PC-9 (cell line): ENCODE measurements at regions of chr6 and their contacts with region 1.

Region 1: DNA sequence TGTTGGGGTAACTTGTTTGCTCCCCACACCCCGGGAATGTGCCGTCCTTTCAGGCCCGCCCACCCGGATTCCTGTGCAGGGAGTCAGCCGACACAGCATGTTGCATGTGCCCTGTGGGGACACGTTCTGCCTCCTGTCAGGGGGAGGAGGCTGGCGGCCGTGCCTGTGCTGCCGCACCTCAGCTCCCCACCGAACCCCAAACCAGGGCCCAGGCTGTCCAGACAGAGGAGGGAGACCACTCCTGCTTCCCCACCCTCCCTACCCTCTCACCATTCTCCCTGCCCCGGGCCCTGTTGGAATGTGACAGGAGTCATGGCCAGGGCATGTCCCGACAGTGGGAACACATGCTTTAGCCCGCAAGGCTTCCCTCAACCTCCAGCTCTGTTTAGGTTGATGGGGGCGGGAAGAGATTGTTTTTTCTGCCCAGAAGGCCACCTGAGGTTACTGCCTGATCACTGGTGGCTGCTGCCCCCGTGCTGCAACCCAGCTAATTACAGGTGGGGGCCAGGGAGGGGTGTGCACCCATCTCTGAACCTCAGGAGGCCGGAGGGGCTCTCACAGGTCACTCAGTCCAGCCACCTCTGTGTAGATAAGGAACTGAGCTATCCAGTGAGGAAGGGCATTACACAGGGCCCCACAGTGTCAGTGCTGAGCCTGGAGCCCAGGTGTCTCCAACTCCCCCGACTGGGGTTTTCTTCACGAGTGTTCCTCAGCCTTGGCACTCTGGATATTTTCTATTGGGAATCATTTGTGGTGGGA is 13.6 kb downstream of the LRRC73 start:
- DNase-seq: peak; percentile 73 to 78
- H3K4me3 ChIP-seq: no peak overlapping the region
- H3K27ac ChIP-seq: peak overlapping the region; percentile 57
- H3K4me1 ChIP-seq: peaks cover 31% of the 10 kb centered on the region
- H3K27me3 ChIP-seq: no peaks in the 10 kb centered on the region
- CTCF ChIP-seq: peak; percentile 82

Region 2: GRCh38 chr6:43174263-43175112 is 322.1 kb before region 1 on chr6:
- CTCF ChIA-PET with region 1: no interaction called
- POLR2A ChIA-PET with region 1: no interaction called
- intact Hi-C with region 1: loop called (anchors 10 kb)
- DNase-seq: peak; percentile 96 to 98
- H3K4me3 ChIP-seq: peak overlapping the region; percentile 49; the same call in 1 of the 2 replicates
- H3K27ac ChIP-seq: peak overlapping the region; percentile 40
- H3K4me1 ChIP-seq: peaks cover 29% of the 10 kb centered on the region
- H3K27me3 ChIP-seq: no peaks in the 10 kb centered on the region
- CTCF ChIP-seq: no peak

Region 3: DNA sequence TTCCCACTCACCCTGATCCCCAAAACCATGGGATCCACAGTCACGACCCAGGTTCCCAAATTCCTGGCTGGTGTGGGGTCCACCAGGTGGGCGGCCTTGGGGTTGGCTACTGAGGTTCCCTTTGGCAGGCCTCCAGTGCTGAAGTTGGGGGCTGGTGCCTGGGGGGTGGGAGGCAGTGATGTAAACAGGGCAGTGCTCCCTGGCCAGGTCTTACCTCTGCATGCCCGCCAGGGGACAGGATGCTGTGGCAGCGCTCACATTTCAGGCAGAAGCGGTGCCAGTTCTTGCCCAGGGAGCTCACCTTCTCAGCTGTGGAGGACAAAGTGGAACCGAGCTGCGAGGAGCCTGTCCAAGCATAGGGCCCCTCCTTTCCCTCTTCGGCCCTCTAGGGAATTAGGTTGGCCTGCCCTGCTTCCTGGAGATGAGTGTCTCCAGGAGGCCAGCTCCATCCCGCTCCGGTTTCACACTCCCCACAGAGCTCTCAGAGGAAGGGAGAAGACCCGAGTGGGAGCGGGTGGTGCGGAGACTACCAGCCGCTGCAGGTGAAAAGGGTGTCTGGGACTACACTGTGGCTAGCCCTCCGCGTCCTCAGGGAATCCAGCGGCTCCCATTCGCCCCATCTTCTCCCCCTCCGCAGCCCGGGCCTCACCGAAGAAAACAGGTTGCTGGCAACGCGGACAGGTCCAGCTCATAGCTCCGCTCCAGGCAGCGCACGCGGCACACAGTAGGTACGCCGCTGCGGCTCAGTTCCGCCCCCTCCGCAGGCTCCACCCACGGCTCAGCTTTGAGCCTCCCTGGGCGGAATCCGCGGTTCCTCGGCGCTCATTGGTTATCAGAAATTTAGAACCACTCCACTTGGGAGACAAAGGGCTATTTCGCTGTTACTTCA is 188.2 kb before region 1 on chr6 and contains the start of gene CRIP3:
- CTCF ChIA-PET with region 1: no interaction called
- POLR2A ChIA-PET with region 1: no interaction called
- intact Hi-C with region 1: loop called (anchors 5 kb)
- DNase-seq: peak; percentile 59 to 60
- H3K4me3 ChIP-seq: peak within 1 kb of the TSS; percentile 50; the same call in 1 of the 2 replicates
- H3K27ac ChIP-seq: no peak within 1 kb of the TSS
- H3K4me1 ChIP-seq: peaks cover 15% of the 10 kb centered on the region
- H3K27me3 ChIP-seq: no peaks in the 10 kb centered on the region
- CTCF ChIP-seq: peak; percentile 52
- total RNA-seq, gene CRIP3: 5.7 and 10.0 TPM in 2 replicates

Region 4: GRCh38 chr6:43436577-43437282 is 59.8 kb before region 1 on chr6:
- CTCF ChIA-PET with region 1: interaction called, 11 read pairs
- POLR2A ChIA-PET with region 1: interaction called, 3 read pairs
- intact Hi-C with region 1: loop called (anchors 10 kb)
- DNase-seq: peak; percentile 85 to 95
- H3K4me3 ChIP-seq: peak overlapping the region; percentile 9; the same call in 1 of the 2 replicates
- H3K27ac ChIP-seq: peak overlapping the region; percentile 79
- H3K4me1 ChIP-seq: peaks cover 36% of the 10 kb centered on the region
- H3K27me3 ChIP-seq: no peaks in the 10 kb centered on the region
- CTCF ChIP-seq: no peak

Region 5: GRCh38 chr6:43477235-43478007 is 19.1 kb before region 1 on chr6 and contains the start of gene TJAP1:
- CTCF ChIA-PET with region 1: no interaction called
- POLR2A ChIA-PET with region 1: interaction called, 5 read pairs
- intact Hi-C with region 1: loop called (anchors 2 kb)
- DNase-seq: peak; percentile 73 to 93
- H3K4me3 ChIP-seq: peak within 1 kb of the TSS; percentile 91
- H3K27ac ChIP-seq: peak within 1 kb of the TSS; percentile 34
- H3K4me1 ChIP-seq: peaks cover 53% of the 10 kb centered on the region
- H3K27me3 ChIP-seq: no peaks in the 10 kb centered on the region
- CTCF ChIP-seq: no peak
- total RNA-seq, gene TJAP1: 50.5 and 60.9 TPM in 2 replicates